PC-3 (cell line): ENCODE measurements at regions of chr9 and their contacts with region 1.

Region 1: GRCh38 chr9:107489687-107490605 is at the start of gene KLF4:
- DNase-seq: peak; percentile 80
- ATAC-seq: peak; percentile 56
- H3K4me3 ChIP-seq: peak within 1 kb of the TSS; percentile 89
- H3K27ac ChIP-seq: peak within 1 kb of the TSS; percentile 64
- H3K4me1 ChIP-seq: peaks cover 21% of the 10 kb centered on the region
- H3K27me3 ChIP-seq: no peaks in the 10 kb centered on the region
- CTCF ChIP-seq: no peak
- total RNA-seq, gene KLF4: 38.8 and 55.1 TPM in 2 replicates

Region 2: DNA sequence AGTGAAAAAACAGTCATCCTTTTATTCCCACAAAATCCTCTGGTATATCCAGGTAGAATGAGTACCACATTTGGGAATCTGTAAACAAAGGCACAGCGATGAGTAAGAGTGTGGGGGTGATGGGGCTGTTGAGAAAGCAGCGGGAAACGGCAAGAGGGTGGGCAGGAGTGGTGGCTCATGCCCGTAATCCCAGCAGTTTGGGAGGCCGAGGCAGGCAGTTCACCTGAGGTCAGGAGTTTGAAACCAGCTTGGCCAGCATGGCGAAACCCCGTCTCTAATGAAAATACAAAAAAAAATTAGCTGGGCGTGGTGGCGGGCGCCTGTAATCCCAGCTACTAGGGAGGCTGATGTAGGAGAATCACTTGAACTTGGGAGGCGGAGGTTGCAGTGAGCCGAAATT is 43.5 kb before region 1 on chr9:
- CTCF ChIA-PET with region 1: no interaction called
- POLR2A ChIA-PET with region 1: interaction called, 25 read pairs
- intact Hi-C with region 1: no loop called
- DNase-seq: no peak
- ATAC-seq: no peak
- H3K4me3 ChIP-seq: no peak overlapping the region
- H3K27ac ChIP-seq: no peak overlapping the region
- H3K4me1 ChIP-seq: no peaks in the 10 kb centered on the region
- H3K27me3 ChIP-seq: no peaks in the 10 kb centered on the region
- CTCF ChIP-seq: no peak

Region 3: DNA sequence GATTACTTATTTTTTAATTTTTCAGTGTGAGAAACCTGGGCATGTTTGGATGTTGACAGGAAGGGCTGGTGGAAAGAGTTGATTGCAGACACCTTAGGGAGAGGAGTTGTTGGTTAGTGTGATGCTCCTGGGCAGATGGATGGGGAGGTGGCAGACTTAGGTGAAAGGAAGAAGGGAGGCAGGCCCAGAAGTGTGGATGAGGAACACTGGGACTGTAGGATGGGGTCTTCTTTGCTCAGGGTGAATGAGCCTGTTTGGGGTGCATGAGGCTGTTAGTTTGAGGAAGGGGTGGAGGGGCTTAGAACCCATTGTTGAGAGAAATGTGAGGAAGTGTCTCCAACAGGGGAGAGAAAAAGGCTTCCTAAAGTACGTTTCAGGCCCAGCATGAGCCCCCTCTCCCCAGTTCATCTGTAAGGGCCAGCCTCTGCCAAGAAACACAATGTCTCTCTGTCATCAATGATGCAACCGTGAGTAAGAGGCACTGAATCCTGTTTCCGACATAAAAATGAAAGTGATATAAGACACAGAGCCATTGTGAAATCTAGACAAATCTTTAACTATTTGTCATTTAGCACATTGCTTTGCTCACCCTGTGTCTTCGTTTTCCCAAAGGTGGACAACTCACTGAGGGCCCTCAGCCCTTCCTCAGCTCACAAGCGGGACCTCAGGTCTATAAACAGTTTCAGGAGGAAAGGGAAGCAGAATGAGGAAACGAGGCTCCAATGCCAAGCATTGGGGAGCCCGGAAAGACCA is 58.3 kb after region 1 on chr9:
- CTCF ChIA-PET with region 1: no interaction called
- POLR2A ChIA-PET with region 1: no interaction called
- intact Hi-C with region 1: loop called (anchors 5 kb)
- DNase-seq: peak; percentile 89
- ATAC-seq: peak; percentile 87
- H3K4me3 ChIP-seq: peak overlapping the region; percentile 45; the same call in 1 of the 2 replicates
- H3K27ac ChIP-seq: peak overlapping the region; percentile 92
- H3K4me1 ChIP-seq: peaks cover 19% of the 10 kb centered on the region
- H3K27me3 ChIP-seq: no peaks in the 10 kb centered on the region
- CTCF ChIP-seq: no peak

Region 4: GRCh38 chr9:107737987-107738743 is 248.2 kb after region 1 on chr9:
- CTCF ChIA-PET with region 1: no interaction called
- POLR2A ChIA-PET with region 1: no interaction called
- intact Hi-C with region 1: loop called (anchors 5 kb)
- DNase-seq: peak; percentile 56
- ATAC-seq: peak; percentile 64
- H3K4me3 ChIP-seq: no peak overlapping the region; the same call in 1 of the 2 replicates
- H3K27ac ChIP-seq: peak overlapping the region; percentile 98
- H3K4me1 ChIP-seq: peaks cover 45% of the 10 kb centered on the region
- H3K27me3 ChIP-seq: no peaks in the 10 kb centered on the region
- CTCF ChIP-seq: no peak

Region 5: GRCh38 chr9:107847978-107848964 is 358.3 kb after region 1 on chr9:
- CTCF ChIA-PET with region 1: no interaction called
- POLR2A ChIA-PET with region 1: no interaction called
- intact Hi-C with region 1: loop called (anchors 10 kb)
- DNase-seq: peak; percentile 56
- ATAC-seq: peak; percentile 71
- H3K4me3 ChIP-seq: no peak overlapping the region
- H3K27ac ChIP-seq: no peak overlapping the region
- H3K4me1 ChIP-seq: peaks cover 12% of the 10 kb centered on the region
- H3K27me3 ChIP-seq: no peaks in the 10 kb centered on the region
- CTCF ChIP-seq: no peak

Region 6: DNA sequence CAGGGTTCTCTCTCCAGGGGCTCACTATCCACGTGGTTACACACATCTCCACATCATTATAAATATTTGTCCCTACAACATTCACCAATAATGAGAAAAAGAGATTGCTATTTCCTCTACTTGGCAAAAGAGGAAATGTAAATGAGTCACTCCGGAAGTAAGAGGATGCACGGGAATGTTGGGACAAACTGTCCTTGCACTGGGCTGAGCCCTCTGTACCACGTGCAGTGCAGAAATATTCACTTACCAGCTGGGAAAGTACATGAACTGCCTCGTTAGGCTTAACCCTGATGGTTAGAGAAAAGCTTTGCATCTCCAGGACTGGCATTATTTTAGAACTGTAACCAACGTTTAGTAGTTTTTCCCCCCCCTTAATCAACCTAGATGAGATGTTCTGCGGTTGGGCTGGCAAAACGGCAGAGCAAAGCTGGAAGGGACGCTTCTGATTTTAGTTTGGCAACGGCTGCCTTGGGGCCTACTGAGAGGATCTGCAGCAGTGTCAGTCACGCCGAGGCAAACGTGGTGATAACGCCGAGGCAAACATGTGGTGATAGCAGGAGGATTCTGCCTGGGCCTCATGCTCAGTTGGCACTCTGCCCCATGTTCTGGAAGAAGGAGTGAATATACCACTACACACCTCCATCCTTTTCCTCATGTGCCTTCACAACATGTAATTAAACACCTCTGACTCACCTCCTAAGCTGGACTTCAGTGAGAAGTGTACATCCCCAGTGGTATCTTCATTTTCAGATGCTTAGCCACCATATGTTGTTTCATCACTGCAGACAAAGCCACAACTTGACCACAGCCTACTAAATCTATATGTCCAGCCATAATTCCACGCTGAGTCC is 661.0 kb after region 1 on chr9:
- CTCF ChIA-PET with region 1: no interaction called
- POLR2A ChIA-PET with region 1: no interaction called
- intact Hi-C with region 1: loop called (anchors 10 kb)
- DNase-seq: no peak
- ATAC-seq: no peak; the same call in 1 of the 2 replicates
- H3K4me3 ChIP-seq: no peak overlapping the region
- H3K27ac ChIP-seq: no peak overlapping the region
- H3K4me1 ChIP-seq: peaks cover 3% of the 10 kb centered on the region
- H3K27me3 ChIP-seq: no peaks in the 10 kb centered on the region
- CTCF ChIP-seq: no peak

Region 7: DNA sequence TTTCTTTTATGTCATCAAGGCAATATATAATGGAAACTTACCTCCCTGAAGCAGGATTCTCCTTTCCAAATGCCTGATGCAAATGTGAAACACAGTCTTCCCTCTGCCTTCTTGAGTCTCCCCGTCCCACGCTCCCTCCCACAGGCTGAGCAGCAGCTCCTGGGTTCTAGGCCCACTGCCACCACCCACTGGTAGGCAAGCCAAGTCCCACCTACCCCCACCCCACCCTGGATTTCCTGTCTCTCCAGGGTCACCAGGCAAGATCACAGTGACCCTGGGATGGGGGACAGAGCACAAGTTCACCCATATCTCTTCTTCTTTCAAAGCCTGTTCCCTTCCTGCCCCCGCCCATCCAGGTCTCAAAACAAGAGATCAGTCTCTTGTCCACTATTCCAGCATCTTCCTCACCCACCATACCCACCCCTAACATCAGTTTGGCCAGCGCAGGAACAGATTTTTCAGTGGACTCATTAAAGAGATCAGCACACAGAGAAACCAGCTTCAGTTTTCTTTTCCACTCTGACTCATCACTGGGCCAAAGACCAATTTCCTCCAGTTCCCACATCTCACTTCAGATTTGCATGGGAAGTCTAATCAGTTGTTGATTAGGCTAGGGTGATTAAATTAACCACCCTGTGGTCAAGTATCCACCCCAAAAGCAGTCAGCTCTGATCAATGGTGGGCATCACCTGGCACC is 1214.4 kb after region 1 on chr9:
- CTCF ChIA-PET with region 1: no interaction called
- POLR2A ChIA-PET with region 1: interaction called, 10 read pairs
- intact Hi-C with region 1: no loop called
- DNase-seq: peak; percentile 40
- ATAC-seq: no peak
- H3K4me3 ChIP-seq: no peak overlapping the region
- H3K27ac ChIP-seq: no peak overlapping the region
- H3K4me1 ChIP-seq: peaks cover 7% of the 10 kb centered on the region; the same call in 1 of the 2 replicates
- H3K27me3 ChIP-seq: no peaks in the 10 kb centered on the region
- CTCF ChIP-seq: no peak